Right ventricle myocardium superior (tissue), 1 donor: ENCODE measurements at regions of chr9 and their contacts with region 1.

Region 1: DNA sequence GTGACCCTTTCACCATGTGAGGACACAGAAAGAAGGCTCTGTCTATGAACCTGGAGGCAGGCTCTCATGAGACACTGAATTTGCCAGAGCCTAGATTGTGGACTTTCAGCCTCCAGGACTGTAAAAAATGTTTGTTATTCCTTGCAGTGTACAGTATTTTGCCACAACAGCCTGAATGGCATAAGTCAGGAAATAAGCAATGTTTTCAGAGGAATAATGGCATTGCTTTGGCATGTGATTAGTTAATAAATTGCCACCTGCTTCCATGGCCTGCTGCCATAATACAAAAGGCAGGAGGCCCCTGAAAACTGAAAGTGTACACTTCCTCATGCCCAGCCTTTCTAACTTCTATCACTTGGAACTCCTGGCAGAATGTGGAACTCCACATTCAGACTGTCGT is 408.1 kb downstream of the GADD45G start:
- DNase-seq: no peak
- ATAC-seq: no peak

Region 2: GRCh38 chr9:89786331-89787054 is 226.5 kb before region 1 on chr9:
- intact Hi-C with region 1: no loop called
- DNase-seq: no peak
- ATAC-seq: peak; percentile 71

Region 3: DNA sequence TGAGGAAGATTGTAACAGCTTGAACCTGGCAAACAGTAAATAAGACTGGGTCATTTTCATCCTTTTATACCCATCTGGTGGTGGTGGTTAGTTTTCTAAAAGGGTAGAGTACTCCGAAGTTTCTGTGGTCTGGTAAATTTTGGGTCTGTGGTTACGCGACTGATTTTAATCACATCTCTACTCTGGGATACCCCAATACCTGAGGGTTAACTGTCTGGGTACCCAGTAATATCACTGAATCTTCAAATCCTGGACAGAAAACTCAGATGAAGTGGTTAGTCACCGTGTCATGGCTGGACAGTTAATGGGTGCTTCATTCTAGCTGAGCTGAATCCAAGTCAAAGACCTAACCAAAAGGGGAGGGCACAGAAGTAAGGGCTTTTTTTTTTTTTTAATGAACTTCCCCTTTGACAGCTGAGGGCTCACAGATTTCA is 66.1 kb after region 1 on chr9:
- intact Hi-C with region 1: loop called (anchors 10 kb)
- DNase-seq: no peak
- ATAC-seq: no peak

Region 4: GRCh38 chr9:90251316-90251715 is 238.4 kb after region 1 on chr9:
- intact Hi-C with region 1: no loop called
- DNase-seq: no peak
- ATAC-seq: no peak